Transverse colon (tissue), 4 donors: ENCODE measurements at regions of chr5 and their contacts with region 1.

Region 1: DNA sequence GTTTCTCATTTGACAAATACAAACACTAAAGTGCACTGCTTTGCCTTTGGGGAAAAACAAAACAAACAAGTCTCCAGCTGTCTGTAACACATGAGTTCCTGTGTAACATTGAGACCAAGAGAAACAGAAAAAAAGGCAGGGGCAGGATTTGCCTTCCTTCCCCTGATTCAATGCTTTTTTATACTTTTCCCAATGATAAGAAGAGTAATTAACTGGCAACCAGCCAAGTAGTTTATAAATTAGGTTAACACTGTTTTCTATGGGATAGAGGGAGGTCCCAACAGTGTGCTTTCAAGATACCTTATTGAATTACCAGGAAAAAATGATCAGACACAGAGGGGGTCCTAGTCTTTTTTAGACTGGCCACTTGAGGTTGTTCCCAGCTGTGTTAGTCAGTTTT is 346.8 kb downstream of the TRIM36 start:
- DNase-seq: no peak
- H3K4me3 ChIP-seq: no peak overlapping the region
- H3K27ac ChIP-seq: no peak overlapping the region
- H3K4me1 ChIP-seq: no peaks in the 10 kb centered on the region
- H3K27me3 ChIP-seq: no peaks in the 10 kb centered on the region
- CTCF ChIP-seq: no peak
- EP300 ChIP-seq: no peak
- POLR2A ChIP-seq: no peak

Region 2: DNA sequence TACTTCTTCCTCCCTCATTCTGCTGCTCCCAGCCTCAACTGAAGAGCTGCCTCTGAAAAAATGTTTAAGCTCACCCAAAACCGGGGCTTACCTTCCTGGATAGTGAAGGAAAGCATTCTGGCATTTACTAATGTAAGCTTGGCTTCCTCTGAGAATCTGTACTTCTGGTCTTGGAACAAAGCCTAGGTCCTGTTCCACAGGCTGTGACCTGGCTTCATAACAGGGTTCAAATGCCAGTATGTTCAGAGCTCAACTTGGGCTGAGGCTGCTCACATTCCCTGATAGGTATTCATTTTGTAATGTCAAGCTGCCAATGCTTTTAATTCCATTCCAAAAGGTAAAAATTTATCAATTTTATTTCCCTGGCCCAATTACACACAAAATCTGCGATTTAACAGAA is 872.7 kb before region 1 on chr5:
- in situ Hi-C with region 1: no loop called
- intact Hi-C with region 1: loop called (anchors 10 kb)
- DNase-seq: no peak
- H3K4me3 ChIP-seq: no peak overlapping the region
- H3K27ac ChIP-seq: no peak overlapping the region
- H3K4me1 ChIP-seq: no peaks in the 10 kb centered on the region
- H3K27me3 ChIP-seq: no peaks in the 10 kb centered on the region
- CTCF ChIP-seq: no peak
- EP300 ChIP-seq: no peak
- POLR2A ChIP-seq: no peak

Region 3: DNA sequence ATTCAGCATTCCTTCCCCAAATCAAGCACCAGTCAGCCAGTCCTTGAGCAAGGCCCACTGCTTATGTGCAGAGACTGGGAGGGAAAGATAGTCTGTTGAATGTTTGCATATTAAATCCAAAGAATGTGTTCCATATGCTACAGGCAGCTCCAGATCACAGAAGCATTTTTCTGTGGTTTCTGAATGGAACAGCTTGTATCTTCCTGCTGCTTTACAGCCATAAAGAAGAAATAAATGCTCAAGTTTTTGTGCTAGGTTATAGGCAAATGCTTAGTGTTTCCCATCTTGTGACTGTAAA is 36.5 kb after region 1 on chr5:
- in situ Hi-C with region 1: no loop called
- intact Hi-C with region 1: no loop called
- DNase-seq: no peak
- H3K4me3 ChIP-seq: no peak overlapping the region
- H3K27ac ChIP-seq: no peak overlapping the region
- H3K4me1 ChIP-seq: no peaks in the 10 kb centered on the region
- H3K27me3 ChIP-seq: no peaks in the 10 kb centered on the region
- CTCF ChIP-seq: no peak
- EP300 ChIP-seq: no peak
- POLR2A ChIP-seq: no peak